ENCODE measurements at regions of chr2 and their contacts with region 1.

Region 1: DNA sequence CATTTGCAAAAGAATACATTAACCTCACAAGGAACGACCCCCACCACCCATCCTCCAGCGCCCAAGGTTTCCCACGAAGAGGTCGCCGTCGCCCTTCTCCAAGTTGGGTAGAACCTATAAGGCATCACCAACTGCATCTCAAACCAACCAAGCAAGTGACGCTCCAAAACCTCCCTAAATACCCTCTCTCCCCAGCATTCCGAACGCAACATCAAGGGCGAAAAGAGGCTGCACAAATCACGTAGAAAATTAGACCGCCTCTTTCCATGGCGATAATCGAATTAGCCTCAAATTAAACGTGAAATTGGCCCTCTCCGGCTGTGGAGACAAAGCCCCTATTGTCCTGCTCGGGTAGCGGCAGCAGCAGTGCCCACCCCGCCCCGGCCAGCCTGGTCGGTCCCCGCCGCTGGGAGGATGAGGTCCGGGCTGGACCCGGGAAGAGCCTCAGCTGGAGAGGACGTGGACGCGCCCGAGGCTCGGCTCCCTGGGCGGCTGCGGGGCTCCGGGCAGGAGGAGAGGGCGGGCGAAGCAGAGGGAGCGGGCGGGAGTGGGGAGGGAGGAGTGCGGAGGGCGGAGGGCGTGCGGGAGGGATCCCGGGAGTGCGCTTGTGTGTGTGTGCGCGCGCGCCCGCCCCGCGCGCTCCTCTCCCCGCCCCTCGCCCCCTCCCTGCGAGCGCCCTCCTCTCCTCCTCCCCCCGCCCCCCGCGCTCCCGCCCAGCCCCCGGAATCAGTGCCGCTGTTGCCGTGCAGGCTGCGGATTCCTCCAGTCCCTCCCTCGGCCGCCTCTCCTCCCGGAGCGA is at the start of gene SPTBN1:
- DNase-seq: peak; percentile 88
- H3K4me3 ChIP-seq: peak within 1 kb of the TSS; percentile 60 to 87 (median 77)
- H3K27ac ChIP-seq: peak within 1 kb of the TSS; percentile 57
- H3K4me1 ChIP-seq: peaks cover 28% of the 10 kb centered on the region
- H3K27me3 ChIP-seq: no peaks in the 10 kb centered on the region
- CTCF ChIP-seq: no peak
- POLR2A ChIP-seq: peak; percentile 76
- total RNA-seq, gene SPTBN1: 320 and 328 TPM in 2 replicates

Region 2: GRCh38 chr2:53970724-53971602 is 484.8 kb before region 1 on chr2 and contains the start of gene PSME4:
- CTCF ChIA-PET with region 1: no interaction called
- POLR2A ChIA-PET with region 1: no interaction called
- dilution Hi-C with region 1: no loop called
- intact Hi-C with region 1: loop called (anchors 10 kb)
- DNase-seq: peak; percentile 90
- H3K4me3 ChIP-seq: peak within 1 kb of the TSS; percentile 73 to 94 (median 93)
- H3K27ac ChIP-seq: peak within 1 kb of the TSS; percentile 86
- H3K4me1 ChIP-seq: peaks cover 17% of the 10 kb centered on the region
- H3K27me3 ChIP-seq: no peaks in the 10 kb centered on the region
- CTCF ChIP-seq: no peak
- POLR2A ChIP-seq: peak; percentile 91
- total RNA-seq, gene PSME4: 82.6 and 83.4 TPM in 2 replicates

Region 3: GRCh38 chr2:54206596-54206995 is 249.2 kb before region 1 on chr2:
- CTCF ChIA-PET with region 1: interaction called, 4 read pairs
- POLR2A ChIA-PET with region 1: no interaction called
- dilution Hi-C with region 1: no loop called
- intact Hi-C with region 1: loop called (anchors 2 kb)
- DNase-seq: peak; percentile 58
- H3K4me3 ChIP-seq: no peak overlapping the region
- H3K27ac ChIP-seq: no peak overlapping the region
- H3K4me1 ChIP-seq: peaks cover 7% of the 10 kb centered on the region
- H3K27me3 ChIP-seq: no peaks in the 10 kb centered on the region
- CTCF ChIP-seq: peak; percentile 29 to 33
- POLR2A ChIP-seq: no peak

Region 4: DNA sequence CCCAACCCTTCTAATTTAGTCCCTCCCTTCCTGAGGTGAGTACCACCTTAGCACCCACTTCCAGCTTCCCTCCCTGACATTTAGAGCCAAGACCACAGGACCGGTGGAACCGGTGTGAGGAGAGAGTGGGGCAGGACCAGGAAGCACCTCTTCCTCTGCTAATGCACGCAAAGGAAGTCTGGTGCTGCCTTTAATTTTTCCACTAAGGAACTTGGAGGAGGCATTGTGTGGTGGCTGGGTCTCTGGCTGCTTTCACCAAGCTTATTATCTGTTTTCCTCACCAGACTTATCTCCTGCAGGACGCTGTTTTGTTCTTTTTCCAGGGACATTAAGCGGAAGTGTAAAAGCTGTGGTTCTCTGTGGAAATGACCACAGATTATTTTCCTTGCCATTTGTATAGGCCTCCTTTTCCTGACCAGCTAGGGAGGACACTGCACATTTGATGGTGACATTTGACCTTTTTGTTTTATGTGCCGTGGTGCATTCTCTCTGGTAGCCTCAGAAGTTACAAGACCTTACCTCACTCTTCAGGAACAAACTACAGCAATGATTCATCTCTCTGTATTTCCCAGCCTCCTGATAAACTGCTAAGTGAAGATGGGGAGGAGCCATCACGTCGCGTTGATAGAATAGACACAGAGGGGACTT is 39.5 kb before region 1 on chr2:
- CTCF ChIA-PET with region 1: no interaction called
- POLR2A ChIA-PET with region 1: no interaction called
- dilution Hi-C with region 1: no loop called
- intact Hi-C with region 1: loop called (anchors 1 kb)
- DNase-seq: peak; percentile 94
- H3K4me3 ChIP-seq: no peak overlapping the region
- H3K27ac ChIP-seq: peak overlapping the region; percentile 74
- H3K4me1 ChIP-seq: peaks cover 44% of the 10 kb centered on the region
- H3K27me3 ChIP-seq: no peaks in the 10 kb centered on the region
- CTCF ChIP-seq: no peak
- POLR2A ChIP-seq: no peak

Region 5: GRCh38 chr2:54503192-54503591 is 47.4 kb after region 1 on chr2:
- CTCF ChIA-PET with region 1: interaction called, 7 read pairs
- POLR2A ChIA-PET with region 1: no interaction called
- dilution Hi-C with region 1: no loop called
- intact Hi-C with region 1: loop called (anchors 1 kb)
- DNase-seq: peak; percentile 66
- H3K4me3 ChIP-seq: no peak overlapping the region
- H3K27ac ChIP-seq: no peak overlapping the region
- H3K4me1 ChIP-seq: peaks cover 4% of the 10 kb centered on the region
- H3K27me3 ChIP-seq: no peaks in the 10 kb centered on the region
- CTCF ChIP-seq: peak; percentile 71 to 80
- POLR2A ChIP-seq: no peak

Region 6: DNA sequence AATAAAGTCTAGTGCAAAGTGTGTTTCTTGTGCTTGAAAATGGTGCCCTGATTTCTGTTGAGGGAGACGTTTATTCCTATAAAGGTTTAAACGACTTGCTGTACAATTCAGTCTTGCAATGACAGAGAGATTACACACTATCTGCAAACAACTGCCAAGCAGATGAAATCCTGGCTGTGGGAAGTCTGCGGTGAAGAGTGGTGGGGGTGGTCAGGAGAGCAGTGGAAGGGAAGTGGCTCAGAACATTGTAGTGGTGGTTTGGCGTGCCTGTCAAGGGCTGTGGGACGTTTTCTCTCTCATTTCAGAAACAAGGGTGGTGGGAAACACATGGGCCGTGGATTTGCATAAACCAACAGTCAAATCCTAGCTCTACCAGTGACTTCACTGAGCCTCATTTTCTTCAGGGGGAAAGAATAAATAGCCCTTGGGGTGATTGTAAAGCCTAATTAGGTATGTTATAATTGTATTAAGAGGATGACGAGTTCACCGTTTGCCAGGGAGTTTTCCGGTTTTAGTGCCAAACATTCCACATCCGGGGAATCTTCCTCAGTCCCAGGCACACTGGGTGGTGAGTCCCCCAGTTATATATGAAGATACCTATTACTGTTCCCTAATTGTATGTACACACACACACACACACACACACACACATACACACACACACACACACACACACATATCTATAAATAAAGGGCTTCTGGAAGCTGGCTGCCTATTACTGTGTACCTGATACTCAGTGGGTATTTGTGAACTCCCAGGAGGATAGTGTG is 115.3 kb after region 1 on chr2:
- CTCF ChIA-PET with region 1: no interaction called
- POLR2A ChIA-PET with region 1: no interaction called
- dilution Hi-C with region 1: no loop called
- intact Hi-C with region 1: loop called (anchors 5 kb)
- DNase-seq: peak; percentile 84
- H3K4me3 ChIP-seq: no peak overlapping the region
- H3K27ac ChIP-seq: peak overlapping the region; percentile 100
- H3K4me1 ChIP-seq: peaks cover 66% of the 10 kb centered on the region
- H3K27me3 ChIP-seq: no peaks in the 10 kb centered on the region
- CTCF ChIP-seq: no peak
- POLR2A ChIP-seq: no peak